MCF 10A (cell line): ENCODE measurements at regions of chr7 and their contacts with region 1.

Region 1: DNA sequence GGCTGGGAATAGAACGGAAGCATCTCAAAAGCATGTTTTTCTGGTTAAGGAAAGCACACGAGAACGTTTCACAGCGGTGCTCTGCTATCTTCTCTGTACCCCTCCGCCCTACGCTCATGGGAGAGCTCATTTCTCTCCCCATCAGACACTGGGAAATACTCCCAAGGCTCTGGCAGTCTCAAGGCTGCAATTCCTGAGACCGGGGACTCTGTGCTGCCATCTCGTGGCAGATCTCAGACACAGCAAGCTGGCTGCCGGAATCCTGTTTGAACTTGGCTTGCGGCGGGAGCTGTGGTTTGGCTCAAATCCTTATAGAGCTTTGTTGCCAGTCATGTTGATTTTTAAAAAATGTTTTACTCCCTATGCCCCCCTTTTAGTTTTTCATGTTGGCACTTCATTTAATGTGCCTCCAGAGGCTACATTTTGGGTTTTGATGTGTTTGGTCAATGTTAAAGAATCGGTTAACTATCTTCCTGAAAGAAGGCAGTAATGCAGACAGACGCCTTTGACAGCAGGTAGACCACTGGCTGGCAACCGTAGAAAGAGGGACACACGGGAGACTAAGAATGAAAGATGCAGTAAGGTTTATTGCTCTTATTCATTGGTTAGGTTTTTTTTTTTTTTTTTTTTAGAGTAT is 27.6 kb downstream of the BMPER start:
- DNase-seq: peak; percentile 84
- H3K4me3 Mint-ChIP-seq: no peak overlapping the region
- H3K27ac Mint-ChIP-seq: peak overlapping the region; percentile 19
- H3K4me1 Mint-ChIP-seq: peaks cover 19% of the 10 kb centered on the region
- H3K27me3 Mint-ChIP-seq: no peaks in the 10 kb centered on the region
- CTCF ChIP-seq: peak; percentile 88

Region 2: DNA sequence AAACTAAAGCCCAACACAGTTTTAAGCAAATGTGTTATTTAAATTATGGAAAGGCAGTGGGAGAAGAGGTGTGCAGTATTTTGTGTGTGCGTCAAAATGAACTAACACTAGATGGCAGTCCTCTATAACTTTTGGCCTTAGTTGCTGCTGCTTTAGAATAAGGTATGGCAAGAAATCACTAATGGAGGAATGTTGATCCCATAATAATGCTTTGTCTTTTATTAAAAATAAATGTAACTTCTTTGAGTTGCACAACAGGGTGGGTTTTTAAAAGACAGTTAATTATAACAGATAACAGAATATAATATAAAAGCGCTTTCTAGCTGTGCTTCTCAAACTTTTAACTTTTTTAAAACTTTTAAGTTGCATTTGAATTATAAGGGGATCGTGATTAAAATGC is 747.2 kb before region 1 on chr7:
- CTCF ChIA-PET with region 1: interaction called, 21 read pairs
- POLR2A ChIA-PET with region 1: no interaction called
- intact Hi-C with region 1: loop called (anchors 2 kb)
- DNase-seq: peak; percentile 57
- H3K4me3 Mint-ChIP-seq: no peak overlapping the region
- H3K27ac Mint-ChIP-seq: no peak overlapping the region
- H3K4me1 Mint-ChIP-seq: no peaks in the 10 kb centered on the region
- H3K27me3 Mint-ChIP-seq: no peaks in the 10 kb centered on the region
- CTCF ChIP-seq: peak; percentile 61

Region 3: GRCh38 chr7:33423646-33424020 is 509.3 kb before region 1 on chr7:
- CTCF ChIA-PET with region 1: interaction called, 12 read pairs
- POLR2A ChIA-PET with region 1: no interaction called
- intact Hi-C with region 1: loop called (anchors 2 kb)
- DNase-seq: peak; percentile 12
- H3K4me3 Mint-ChIP-seq: no peak overlapping the region
- H3K27ac Mint-ChIP-seq: no peak overlapping the region
- H3K4me1 Mint-ChIP-seq: no peaks in the 10 kb centered on the region
- H3K27me3 Mint-ChIP-seq: no peaks in the 10 kb centered on the region
- CTCF ChIP-seq: peak; percentile 43

Region 4: DNA sequence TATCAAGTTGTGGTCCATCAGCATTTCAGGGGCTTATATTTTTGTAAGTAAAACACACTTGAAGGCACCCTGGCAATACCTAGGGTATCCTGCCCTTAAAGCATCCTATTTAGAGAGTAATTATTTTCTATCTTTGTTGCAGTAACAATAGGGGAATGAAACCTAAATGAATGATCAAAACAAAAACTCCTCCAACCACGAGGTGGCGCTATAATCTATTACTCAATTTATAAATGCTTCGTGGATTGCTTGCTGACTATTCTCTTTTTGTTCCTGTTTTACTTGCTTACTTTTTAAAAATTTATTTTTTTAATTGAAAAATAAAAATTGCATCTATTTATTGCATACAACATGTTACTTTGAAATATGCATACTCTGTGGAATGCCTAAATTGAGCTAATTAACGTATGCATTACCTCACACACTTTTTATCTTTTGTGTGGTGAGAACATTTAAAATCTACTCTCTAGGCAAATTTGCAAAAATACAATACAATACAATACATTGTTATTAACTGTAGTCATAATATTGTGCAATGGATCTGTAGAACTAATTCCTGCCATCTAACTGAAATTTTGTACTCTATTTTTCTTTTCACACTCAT is 175.3 kb before region 1 on chr7:
- CTCF ChIA-PET with region 1: interaction called, 177 read pairs
- POLR2A ChIA-PET with region 1: interaction called, 4 read pairs
- intact Hi-C with region 1: loop called (anchors 1 kb)
- DNase-seq: peak; percentile 61
- H3K4me3 Mint-ChIP-seq: no peak overlapping the region
- H3K27ac Mint-ChIP-seq: no peak overlapping the region
- H3K4me1 Mint-ChIP-seq: no peaks in the 10 kb centered on the region
- H3K27me3 Mint-ChIP-seq: no peaks in the 10 kb centered on the region
- CTCF ChIP-seq: peak; percentile 55

Region 5: GRCh38 chr7:33886149-33886623 is 46.8 kb before region 1 on chr7:
- CTCF ChIA-PET with region 1: interaction called, 10 read pairs
- POLR2A ChIA-PET with region 1: no interaction called
- intact Hi-C with region 1: no loop called
- DNase-seq: no peak
- H3K4me3 Mint-ChIP-seq: no peak overlapping the region
- H3K27ac Mint-ChIP-seq: no peak overlapping the region
- H3K4me1 Mint-ChIP-seq: no peaks in the 10 kb centered on the region
- H3K27me3 Mint-ChIP-seq: no peaks in the 10 kb centered on the region
- CTCF ChIP-seq: peak; percentile 17

Region 6: DNA sequence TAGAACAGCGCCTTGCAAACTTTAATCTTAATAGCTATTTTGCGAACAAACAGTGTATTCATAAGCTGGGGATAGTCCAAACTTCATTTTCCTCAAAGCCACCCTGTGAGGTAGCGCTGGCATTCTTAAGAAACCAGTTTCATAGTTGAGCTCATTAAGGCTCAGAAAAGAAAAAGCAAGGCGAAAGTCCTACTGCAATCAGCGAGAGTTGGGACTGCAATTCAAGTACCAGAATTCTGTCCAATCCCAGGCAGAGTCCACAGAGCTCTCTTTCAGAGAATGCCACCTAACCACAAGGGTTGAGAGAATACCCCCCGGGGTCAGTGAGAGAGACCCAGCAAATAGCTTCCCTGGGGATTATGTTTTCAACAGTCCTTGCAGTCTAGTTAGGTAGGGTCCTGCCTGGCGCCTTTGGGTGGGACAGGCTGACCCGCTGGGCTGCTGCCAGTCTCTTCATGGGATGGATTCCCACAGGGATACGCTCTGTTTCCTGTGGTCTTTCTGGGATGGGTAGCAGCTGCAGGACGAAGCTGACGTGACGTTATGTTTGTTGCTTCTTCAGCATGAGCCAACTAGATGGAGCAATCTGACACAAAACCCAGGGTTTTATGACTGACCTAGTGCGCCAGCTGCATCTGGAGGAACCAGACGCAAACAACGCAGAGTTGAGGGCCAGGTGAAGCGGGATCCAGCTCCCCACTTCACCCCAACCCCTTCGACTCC is 11.6 kb before region 1 on chr7:
- CTCF ChIA-PET with region 1: interaction called, 39 read pairs
- POLR2A ChIA-PET with region 1: no interaction called
- intact Hi-C with region 1: no loop called
- DNase-seq: no peak
- H3K4me3 Mint-ChIP-seq: no peak overlapping the region
- H3K27ac Mint-ChIP-seq: no peak overlapping the region
- H3K4me1 Mint-ChIP-seq: no peaks in the 10 kb centered on the region
- H3K27me3 Mint-ChIP-seq: peaks cover 20% of the 10 kb centered on the region
- CTCF ChIP-seq: no peak

Region 7: DNA sequence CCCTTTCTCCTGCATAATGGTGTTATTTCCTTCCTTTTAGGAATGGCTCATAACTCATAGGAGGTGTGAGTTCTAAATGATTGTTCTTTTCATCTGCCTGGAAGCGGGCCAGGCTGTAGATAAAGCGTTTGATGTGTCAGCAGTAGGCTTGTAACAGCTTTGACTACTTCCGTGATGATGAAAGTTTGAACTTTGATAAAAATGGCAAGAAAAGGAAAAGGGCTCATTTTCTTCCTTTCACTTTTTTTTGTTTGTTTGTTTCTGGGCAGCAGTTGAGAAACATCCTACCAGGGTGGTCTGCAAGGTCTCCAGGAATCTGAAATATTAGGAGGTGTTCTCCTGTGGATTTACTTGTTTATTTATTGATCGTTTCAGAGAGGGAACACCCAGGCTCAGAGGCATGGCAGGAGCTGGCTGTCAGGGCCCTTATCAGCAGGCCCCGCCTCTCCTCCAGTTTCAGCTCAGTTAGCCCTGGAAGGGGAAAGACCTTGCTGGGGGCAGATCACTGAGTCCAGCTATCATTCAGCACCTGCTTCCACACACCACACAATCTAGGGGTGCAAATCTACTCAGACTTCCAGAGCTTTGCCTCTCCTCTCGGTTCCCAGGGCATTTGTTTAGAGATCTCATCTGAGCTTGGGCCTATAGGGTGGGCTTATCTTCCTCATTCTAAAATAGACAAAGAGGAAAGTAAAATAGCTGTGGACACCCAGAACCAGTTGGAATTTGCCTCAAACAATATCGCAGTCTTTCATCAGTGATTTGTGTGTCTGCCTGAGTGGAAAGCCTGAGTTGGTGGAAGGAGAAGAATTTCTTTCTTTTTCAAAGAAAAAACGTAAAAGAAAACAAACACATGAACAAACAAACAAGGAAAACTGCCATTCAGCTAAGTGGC is 103.3 kb after region 1 on chr7:
- CTCF ChIA-PET with region 1: interaction called, 12 read pairs
- POLR2A ChIA-PET with region 1: no interaction called
- intact Hi-C with region 1: no loop called
- DNase-seq: peak; percentile 71
- H3K4me3 Mint-ChIP-seq: no peak overlapping the region
- H3K27ac Mint-ChIP-seq: peak overlapping the region; percentile 5
- H3K4me1 Mint-ChIP-seq: peaks cover 19% of the 10 kb centered on the region
- H3K27me3 Mint-ChIP-seq: no peaks in the 10 kb centered on the region
- CTCF ChIP-seq: no peak